ENCODE measurements at regions of chr13 and their contacts with region 1.

Region 1: DNA sequence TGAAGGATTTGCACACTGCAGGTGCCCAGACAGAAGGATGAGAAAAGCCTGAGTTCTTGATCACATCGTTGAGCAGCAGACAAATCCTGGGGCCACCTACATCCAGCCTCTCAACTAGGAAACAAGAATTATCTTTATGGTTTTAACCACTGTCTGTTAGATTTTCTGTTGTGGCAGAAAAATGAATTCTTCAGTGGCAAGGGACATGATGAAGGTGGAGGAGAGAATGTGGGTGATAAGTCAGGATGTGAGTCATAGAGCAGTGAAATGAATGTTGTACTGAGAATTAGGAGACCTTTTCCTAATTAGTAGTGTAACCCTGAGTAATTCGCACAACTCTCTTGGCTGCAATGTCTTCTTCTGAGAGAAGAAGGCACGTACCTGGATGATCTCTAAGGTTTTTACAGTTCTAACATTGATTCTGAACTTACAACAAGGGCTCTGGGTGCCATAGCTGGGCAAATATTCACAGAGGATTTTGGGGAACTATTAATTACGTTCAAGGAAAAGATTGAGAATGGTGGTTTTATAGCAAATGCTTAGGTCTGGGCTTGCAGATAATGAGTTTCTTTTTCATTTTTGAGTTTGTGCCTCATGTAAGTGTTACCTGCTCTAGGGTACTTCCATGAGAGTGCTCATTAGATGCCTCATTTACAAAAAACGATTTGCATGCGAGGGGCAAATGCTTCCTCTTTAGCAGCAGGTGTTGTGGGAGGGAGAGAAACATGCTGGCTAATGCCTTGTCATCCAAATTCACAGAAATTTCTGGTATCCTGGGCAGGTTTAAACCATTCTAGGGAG is 111.0 kb upstream of the KL start:
- DNase-seq: peak; percentile 77
- H3K4me3 Mint-ChIP-seq: peak overlapping the region; percentile 77
- H3K27ac Mint-ChIP-seq: peak overlapping the region; percentile 91
- H3K4me1 Mint-ChIP-seq: peaks cover 42% of the 10 kb centered on the region
- H3K27me3 Mint-ChIP-seq: peaks cover 2% of the 10 kb centered on the region

Region 2: DNA sequence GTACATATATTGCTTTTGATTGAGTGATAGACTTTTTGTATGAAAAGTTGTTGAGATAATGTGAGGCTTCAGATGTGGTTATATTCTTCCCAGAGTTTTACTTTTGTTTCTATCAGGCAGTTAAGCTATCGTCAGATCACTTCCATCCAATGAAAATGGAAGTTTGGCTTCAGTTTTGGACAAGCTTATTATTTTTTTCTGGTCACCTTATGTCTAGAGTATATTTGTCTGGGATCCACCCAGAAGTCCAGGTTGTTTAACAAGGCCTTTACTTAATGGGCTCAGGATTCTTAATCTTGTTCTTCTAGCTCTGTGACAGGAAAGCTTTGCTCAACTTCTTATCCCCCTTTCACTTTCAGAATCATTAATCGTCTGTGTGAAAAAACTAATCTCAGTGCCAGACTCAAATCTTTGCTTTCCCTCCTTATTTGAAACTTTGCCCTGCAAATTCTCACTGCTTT is 168.1 kb before region 1 on chr13:
- intact Hi-C with region 1: loop called (anchors 1 kb)
- DNase-seq: peak; percentile 73
- H3K4me3 Mint-ChIP-seq: peak overlapping the region; percentile 82
- H3K27ac Mint-ChIP-seq: peak overlapping the region; percentile 81
- H3K4me1 Mint-ChIP-seq: peaks cover 31% of the 10 kb centered on the region
- H3K27me3 Mint-ChIP-seq: no peaks in the 10 kb centered on the region

Region 3: GRCh38 chr13:32791545-32792172 is 113.6 kb before region 1 on chr13:
- intact Hi-C with region 1: loop called (anchors 2 kb)
- DNase-seq: peak; percentile 87
- H3K4me3 Mint-ChIP-seq: peak overlapping the region; percentile 54
- H3K27ac Mint-ChIP-seq: peak overlapping the region; percentile 46
- H3K4me1 Mint-ChIP-seq: peaks cover 43% of the 10 kb centered on the region
- H3K27me3 Mint-ChIP-seq: no peaks in the 10 kb centered on the region

Region 4: DNA sequence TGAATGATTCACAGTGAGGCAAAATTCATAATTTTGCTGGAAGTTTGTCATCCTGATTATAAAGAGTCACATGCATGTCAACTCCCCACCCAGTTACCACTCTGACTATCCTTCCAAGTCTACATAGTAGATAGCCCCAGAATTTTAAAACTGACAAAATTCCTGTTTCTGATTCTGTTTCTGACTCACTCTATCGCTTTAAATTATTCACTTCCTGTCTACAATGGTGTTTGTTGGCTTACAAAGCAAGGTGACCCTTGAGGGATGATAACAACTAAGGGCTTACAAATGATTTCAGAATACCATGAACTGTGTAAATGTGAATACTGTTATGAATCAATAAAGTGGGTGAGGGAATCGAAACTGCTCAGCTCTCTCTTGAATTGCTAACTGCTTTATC is 12.2 kb after region 1 on chr13:
- intact Hi-C with region 1: loop called (anchors 1 kb)
- DNase-seq: no peak
- H3K4me3 Mint-ChIP-seq: no peak overlapping the region
- H3K27ac Mint-ChIP-seq: peak overlapping the region; percentile 57
- H3K4me1 Mint-ChIP-seq: peaks cover 10% of the 10 kb centered on the region
- H3K27me3 Mint-ChIP-seq: no peaks in the 10 kb centered on the region

Region 5: DNA sequence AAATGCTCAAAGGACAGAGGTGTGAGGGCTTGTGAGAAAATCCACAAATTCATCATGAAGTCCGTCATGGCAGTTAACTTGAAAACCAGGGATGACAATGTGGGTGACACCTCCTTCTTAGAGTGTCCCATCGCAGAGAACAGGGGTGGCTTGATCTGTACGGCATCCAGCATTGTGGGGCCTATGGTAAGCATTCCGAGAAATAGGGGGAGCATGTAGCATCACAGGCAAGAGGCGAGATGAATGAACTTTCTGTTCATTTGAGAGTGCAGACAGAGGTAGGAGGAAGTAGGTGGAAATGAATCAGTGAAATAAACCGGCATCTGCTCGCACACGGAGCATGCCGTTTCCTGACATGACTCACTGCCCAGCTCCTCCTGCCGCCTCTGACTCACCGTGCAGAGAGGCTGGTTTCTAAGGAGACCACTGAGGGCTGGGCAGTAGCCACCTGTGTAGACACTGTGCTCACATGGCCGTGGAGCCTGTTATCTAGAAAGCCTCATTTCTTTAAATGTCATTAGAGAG is 1251.6 kb after region 1 on chr13:
- intact Hi-C with region 1: loop called (anchors 10 kb)
- DNase-seq: peak; percentile 84
- H3K4me3 Mint-ChIP-seq: peak overlapping the region; percentile 71
- H3K27ac Mint-ChIP-seq: peak overlapping the region; percentile 85
- H3K4me1 Mint-ChIP-seq: peaks cover 19% of the 10 kb centered on the region
- H3K27me3 Mint-ChIP-seq: peaks cover 17% of the 10 kb centered on the region

Measured in activated CD4-positive, alpha-beta T cell treated with anti-CD3 and anti-CD28 coated beads, Interleukin-2, amount 10 ng/mL, durations not matched to agents 24 days and 14 days (primary cell).